Activated CD4-positive, alpha-beta memory T cell treated with anti-CD3 and anti-CD28 coated beads for 36 hours (primary cell): ENCODE measurements at regions of chr2 and their contacts with region 1.

Region 1: GRCh38 chr2:16608661-16609643 is 56.7 kb downstream of the CYRIA start:
- DNase-seq: peak; percentile 90
- H3K4me3 Mint-ChIP-seq: peak overlapping the region; percentile 69
- H3K27ac Mint-ChIP-seq: no peak overlapping the region
- H3K4me1 Mint-ChIP-seq: peaks cover 2% of the 10 kb centered on the region
- H3K27me3 Mint-ChIP-seq: peaks cover 8% of the 10 kb centered on the region

Region 2: DNA sequence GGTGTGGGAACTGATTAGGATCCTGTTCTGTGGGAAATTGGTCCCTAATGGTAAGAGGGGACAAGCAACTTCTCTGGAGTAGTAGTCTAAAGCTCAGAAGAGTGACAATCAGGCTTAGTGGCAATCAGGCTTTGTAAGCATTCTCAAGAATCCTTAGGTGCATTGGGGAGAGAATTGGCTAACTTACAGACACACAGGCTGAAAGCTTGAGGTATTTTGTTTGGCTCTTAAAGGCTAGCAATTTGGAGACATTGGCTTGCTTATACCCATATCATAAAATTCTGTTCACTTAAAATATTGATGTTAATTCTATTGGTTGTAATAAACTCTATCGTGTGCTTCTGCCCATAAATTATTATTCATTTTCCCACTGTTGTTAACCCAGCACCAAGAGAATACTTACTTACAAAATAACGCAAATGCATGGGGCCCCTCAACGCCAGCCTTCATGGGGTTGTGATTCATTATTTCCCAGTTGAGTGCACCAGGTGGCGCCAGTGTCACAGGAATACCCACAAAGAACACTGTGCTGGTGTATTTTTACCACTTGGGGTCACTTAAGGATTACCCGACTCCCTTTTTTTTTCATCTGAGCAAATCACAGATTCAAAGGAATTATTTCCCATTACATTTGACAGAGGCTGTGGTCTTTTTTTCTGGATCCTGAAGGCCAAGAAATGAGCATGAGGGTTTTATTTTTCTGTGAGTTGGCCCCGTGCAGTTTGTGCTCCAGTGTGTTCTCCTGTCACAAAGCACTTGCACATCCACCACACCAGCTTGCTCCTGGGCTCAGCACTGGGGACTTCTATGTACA is 971.8 kb before region 1 on chr2:
- CTCF ChIA-PET with region 1: interaction called, 10 read pairs
- POLR2A ChIA-PET with region 1: no interaction called
- intact Hi-C with region 1: no loop called
- DNase-seq: peak; percentile 69
- H3K4me3 Mint-ChIP-seq: no peak overlapping the region
- H3K27ac Mint-ChIP-seq: no peak overlapping the region
- H3K4me1 Mint-ChIP-seq: no peaks in the 10 kb centered on the region
- H3K27me3 Mint-ChIP-seq: no peaks in the 10 kb centered on the region

Region 3: DNA sequence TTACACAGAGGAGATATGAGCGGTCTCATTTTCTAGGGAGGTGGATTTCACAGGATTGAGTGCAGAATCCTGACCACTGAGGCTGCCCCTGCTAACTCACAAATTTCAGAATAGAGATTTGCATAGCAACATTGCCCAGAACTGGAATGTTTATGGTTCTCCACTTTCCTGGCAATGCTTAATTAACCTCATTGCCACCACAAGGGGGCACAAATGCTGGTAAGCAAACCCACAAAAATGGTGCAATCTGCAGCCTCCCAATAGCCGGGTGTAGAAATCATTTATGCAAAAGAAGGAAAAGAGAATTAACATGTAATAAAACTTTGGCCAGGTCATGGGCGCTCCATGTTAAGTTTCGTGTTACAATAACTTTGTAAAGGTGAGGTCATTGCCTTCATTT is 55.7 kb before region 1 on chr2:
- CTCF ChIA-PET with region 1: interaction called, 6 read pairs
- POLR2A ChIA-PET with region 1: no interaction called
- intact Hi-C with region 1: loop called (anchors 1 kb)
- DNase-seq: no peak
- H3K4me3 Mint-ChIP-seq: no peak overlapping the region
- H3K27ac Mint-ChIP-seq: no peak overlapping the region
- H3K4me1 Mint-ChIP-seq: no peaks in the 10 kb centered on the region
- H3K27me3 Mint-ChIP-seq: no peaks in the 10 kb centered on the region

Region 4: GRCh38 chr2:16591370-16591933 is 17.5 kb before region 1 on chr2:
- CTCF ChIA-PET with region 1: interaction called, 15 read pairs
- POLR2A ChIA-PET with region 1: no interaction called
- intact Hi-C with region 1: no loop called
- DNase-seq: no peak
- H3K4me3 Mint-ChIP-seq: no peak overlapping the region
- H3K27ac Mint-ChIP-seq: no peak overlapping the region
- H3K4me1 Mint-ChIP-seq: no peaks in the 10 kb centered on the region
- H3K27me3 Mint-ChIP-seq: no peaks in the 10 kb centered on the region

Region 5: GRCh38 chr2:16623031-16623430 is 14.1 kb after region 1 on chr2:
- CTCF ChIA-PET with region 1: interaction called, 10 read pairs
- POLR2A ChIA-PET with region 1: no interaction called
- intact Hi-C with region 1: no loop called
- DNase-seq: no peak
- H3K4me3 Mint-ChIP-seq: no peak overlapping the region
- H3K27ac Mint-ChIP-seq: no peak overlapping the region
- H3K4me1 Mint-ChIP-seq: peaks cover 29% of the 10 kb centered on the region
- H3K27me3 Mint-ChIP-seq: peaks cover 4% of the 10 kb centered on the region

Region 6: DNA sequence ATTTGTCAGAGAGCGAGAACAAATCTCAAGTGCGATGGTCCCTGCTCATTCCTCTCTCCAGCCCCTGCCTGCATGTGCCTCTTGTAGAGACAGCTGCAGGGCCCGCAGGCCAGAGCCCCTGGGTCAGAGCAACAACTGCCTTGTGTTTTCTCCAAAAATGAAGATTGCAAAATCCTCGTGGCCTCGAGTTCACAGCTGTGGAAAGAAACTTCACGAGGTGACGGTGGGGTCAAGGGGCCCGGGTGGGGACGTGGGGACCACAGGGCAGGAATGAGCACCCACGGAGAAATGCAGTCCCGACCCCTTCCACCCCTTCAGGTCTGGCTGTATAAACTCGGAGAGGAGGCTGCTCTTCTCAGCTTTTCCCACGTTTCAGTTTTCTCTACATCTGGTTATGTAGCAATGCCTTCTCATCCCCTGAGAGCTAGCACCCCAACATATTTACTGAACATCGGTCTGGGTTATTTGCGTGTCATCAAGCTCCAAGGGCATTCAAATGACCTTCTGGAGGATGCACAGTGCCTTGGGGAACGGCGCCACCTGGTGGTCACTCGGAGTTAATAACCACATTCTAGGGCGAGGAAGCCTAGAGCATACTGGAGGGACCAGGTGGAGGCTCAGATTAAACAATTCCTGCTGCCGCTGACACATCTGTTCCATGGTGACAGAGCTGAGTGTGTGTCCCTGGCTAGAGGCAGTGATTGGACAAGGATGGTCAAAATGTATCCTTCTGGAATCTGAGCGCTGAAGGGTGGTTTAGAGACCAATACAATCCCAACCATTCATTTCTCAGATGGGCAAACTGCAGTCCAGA is 148.1 kb after region 1 on chr2:
- CTCF ChIA-PET with region 1: interaction called, 48 read pairs
- POLR2A ChIA-PET with region 1: no interaction called
- intact Hi-C with region 1: loop called (anchors 1 kb)
- DNase-seq: peak; percentile 75
- H3K4me3 Mint-ChIP-seq: no peak overlapping the region
- H3K27ac Mint-ChIP-seq: no peak overlapping the region
- H3K4me1 Mint-ChIP-seq: no peaks in the 10 kb centered on the region
- H3K27me3 Mint-ChIP-seq: no peaks in the 10 kb centered on the region

Region 7: GRCh38 chr2:16832910-16833309 is 224.0 kb after region 1 on chr2:
- CTCF ChIA-PET with region 1: no interaction called
- POLR2A ChIA-PET with region 1: no interaction called
- intact Hi-C with region 1: no loop called
- DNase-seq: no peak
- H3K4me3 Mint-ChIP-seq: no peak overlapping the region
- H3K27ac Mint-ChIP-seq: no peak overlapping the region
- H3K4me1 Mint-ChIP-seq: no peaks in the 10 kb centered on the region
- H3K27me3 Mint-ChIP-seq: no peaks in the 10 kb centered on the region